Activated CD8-positive, alpha-beta T cell treated with anti-CD3 and anti-CD28 coated beads for 36 hours (primary cell): ENCODE measurements at regions of chr14 and their contacts with region 1.

Region 1: GRCh38 chr14:106417224-106418049 is 891.1 kb downstream of the TMEM121 start:
- DNase-seq: peak; percentile 100
- ATAC-seq: peak; percentile 97
- H3K4me3 Mint-ChIP-seq: no peak overlapping the region
- H3K27ac Mint-ChIP-seq: no peak overlapping the region
- H3K4me1 Mint-ChIP-seq: no peaks in the 10 kb centered on the region
- H3K27me3 Mint-ChIP-seq: peaks cover 2% of the 10 kb centered on the region
- CTCF ChIP-seq: peak; percentile 100

Region 2: GRCh38 chr14:106166232-106166631 is 251.2 kb before region 1 on chr14:
- CTCF ChIA-PET with region 1: no interaction called
- POLR2A ChIA-PET with region 1: no interaction called
- intact Hi-C with region 1: no loop called
- DNase-seq: no peak
- ATAC-seq: no peak
- H3K4me3 Mint-ChIP-seq: no peak overlapping the region
- H3K27ac Mint-ChIP-seq: no peak overlapping the region
- H3K4me1 Mint-ChIP-seq: peaks cover 26% of the 10 kb centered on the region
- H3K27me3 Mint-ChIP-seq: no peaks in the 10 kb centered on the region
- CTCF ChIP-seq: no peak

Region 3: GRCh38 chr14:106390401-106390800 is 27.0 kb before region 1 on chr14:
- CTCF ChIA-PET with region 1: interaction called, 68 read pairs
- POLR2A ChIA-PET with region 1: no interaction called
- intact Hi-C with region 1: no loop called
- DNase-seq: no peak
- ATAC-seq: peak; percentile 34
- H3K4me3 Mint-ChIP-seq: no peak overlapping the region
- H3K27ac Mint-ChIP-seq: no peak overlapping the region
- H3K4me1 Mint-ChIP-seq: peaks cover 30% of the 10 kb centered on the region
- H3K27me3 Mint-ChIP-seq: peaks cover 11% of the 10 kb centered on the region
- CTCF ChIP-seq: no peak

Region 4: GRCh38 chr14:106491851-106492250 is 74.4 kb after region 1 on chr14:
- CTCF ChIA-PET with region 1: interaction called, 103 read pairs
- POLR2A ChIA-PET with region 1: no interaction called
- intact Hi-C with region 1: no loop called
- DNase-seq: peak; percentile 60
- ATAC-seq: no peak
- H3K4me3 Mint-ChIP-seq: no peak overlapping the region
- H3K27ac Mint-ChIP-seq: no peak overlapping the region
- H3K4me1 Mint-ChIP-seq: peaks cover 20% of the 10 kb centered on the region
- H3K27me3 Mint-ChIP-seq: no peaks in the 10 kb centered on the region
- CTCF ChIP-seq: peak; percentile 58

Region 5: DNA sequence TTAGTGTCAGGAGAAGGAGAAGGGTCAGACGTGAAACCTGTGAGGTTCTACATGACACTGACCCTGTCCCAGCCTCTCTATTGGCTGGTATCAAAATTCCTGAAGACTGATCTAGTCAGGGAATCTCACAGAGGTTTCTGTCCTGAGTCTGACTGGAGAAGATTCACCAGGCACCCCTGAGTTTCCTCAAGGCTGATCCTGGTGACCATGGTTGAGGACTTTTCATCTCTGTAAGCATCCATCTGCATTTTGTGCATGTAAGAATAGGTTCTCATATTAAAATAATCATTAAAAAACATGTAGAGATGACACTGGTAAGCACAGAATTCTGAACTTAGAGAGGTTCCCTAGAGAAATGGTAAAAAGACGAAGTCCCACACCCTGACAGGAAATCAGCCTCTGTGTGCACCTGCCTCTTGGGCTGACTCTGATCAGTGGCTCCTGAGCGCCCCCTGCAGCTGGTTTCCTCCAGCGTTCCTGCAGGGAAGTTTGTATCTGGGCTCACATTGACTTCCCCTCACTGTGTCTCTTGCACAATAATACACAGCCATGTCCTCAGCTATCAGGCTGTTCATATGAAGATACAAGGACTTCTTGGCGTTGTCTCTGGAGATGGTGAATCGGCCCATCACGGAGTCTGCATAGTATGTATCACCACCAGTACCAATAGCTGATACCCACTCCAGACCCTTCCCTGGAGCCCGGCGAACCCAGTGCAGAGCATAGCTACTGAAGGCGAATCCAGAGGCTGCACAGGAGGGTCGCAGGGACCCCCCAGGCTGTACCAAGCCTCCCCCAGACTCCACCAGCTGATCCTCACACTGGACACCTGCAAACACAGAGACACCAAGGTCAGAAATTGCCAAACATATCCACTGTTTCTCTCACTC is 100.9 kb after region 1 on chr14:
- CTCF ChIA-PET with region 1: interaction called, 270 read pairs
- POLR2A ChIA-PET with region 1: interaction called, 3 read pairs
- intact Hi-C with region 1: no loop called
- DNase-seq: peak; percentile 94
- ATAC-seq: peak; percentile 75
- H3K4me3 Mint-ChIP-seq: no peak overlapping the region
- H3K27ac Mint-ChIP-seq: no peak overlapping the region
- H3K4me1 Mint-ChIP-seq: peaks cover 11% of the 10 kb centered on the region
- H3K27me3 Mint-ChIP-seq: peaks cover 2% of the 10 kb centered on the region
- CTCF ChIP-seq: peak; percentile 91

Region 6: DNA sequence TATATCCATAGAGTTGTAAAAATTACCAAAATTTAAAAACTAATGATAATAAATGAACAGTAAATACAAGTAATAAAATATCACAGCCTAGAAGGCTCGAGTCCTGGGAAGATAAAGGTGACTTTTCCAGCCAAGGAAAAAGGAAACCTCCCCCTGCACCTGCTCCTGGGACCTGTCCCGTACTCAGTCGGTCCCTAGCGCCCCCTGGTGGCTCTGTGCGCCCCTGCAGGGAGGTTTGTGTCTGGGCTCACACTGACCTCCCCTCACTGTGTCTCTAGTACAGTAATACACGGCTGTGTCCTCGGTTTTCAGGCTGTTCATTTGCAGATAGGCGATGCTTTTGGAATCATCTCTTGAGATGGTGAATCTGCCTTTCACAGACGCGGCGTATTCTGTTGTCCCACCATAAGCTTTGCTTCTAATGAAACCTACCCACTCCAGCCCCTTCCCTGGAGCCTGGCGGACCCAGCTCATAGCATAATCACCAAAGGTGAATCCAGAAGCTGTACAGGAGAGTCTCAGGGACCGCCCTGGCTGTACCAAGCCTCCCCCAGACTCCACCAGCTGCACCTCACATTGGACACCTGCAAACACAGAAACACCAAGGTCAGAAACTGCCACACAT is 139.3 kb after region 1 on chr14:
- CTCF ChIA-PET with region 1: interaction called, 16 read pairs
- POLR2A ChIA-PET with region 1: no interaction called
- intact Hi-C with region 1: no loop called
- DNase-seq: peak; percentile 88
- ATAC-seq: peak; percentile 77
- H3K4me3 Mint-ChIP-seq: no peak overlapping the region
- H3K27ac Mint-ChIP-seq: no peak overlapping the region
- H3K4me1 Mint-ChIP-seq: no peaks in the 10 kb centered on the region
- H3K27me3 Mint-ChIP-seq: peaks cover 2% of the 10 kb centered on the region
- CTCF ChIP-seq: peak; percentile 94

Region 7: GRCh38 chr14:106605548-106606448 is 188.4 kb after region 1 on chr14:
- CTCF ChIA-PET with region 1: interaction called, 12 read pairs
- POLR2A ChIA-PET with region 1: no interaction called
- intact Hi-C with region 1: no loop called
- DNase-seq: peak; percentile 94
- ATAC-seq: peak; percentile 100
- H3K4me3 Mint-ChIP-seq: no peak overlapping the region
- H3K27ac Mint-ChIP-seq: no peak overlapping the region
- H3K4me1 Mint-ChIP-seq: no peaks in the 10 kb centered on the region
- H3K27me3 Mint-ChIP-seq: peaks cover 20% of the 10 kb centered on the region
- CTCF ChIP-seq: peak; percentile 75